Activated naive CD4-positive, alpha-beta T cell treated with anti-CD3 and anti-CD28 coated beads for 36 hours (primary cell): ENCODE measurements at regions of chr5 and their contacts with region 1.

Region 1: DNA sequence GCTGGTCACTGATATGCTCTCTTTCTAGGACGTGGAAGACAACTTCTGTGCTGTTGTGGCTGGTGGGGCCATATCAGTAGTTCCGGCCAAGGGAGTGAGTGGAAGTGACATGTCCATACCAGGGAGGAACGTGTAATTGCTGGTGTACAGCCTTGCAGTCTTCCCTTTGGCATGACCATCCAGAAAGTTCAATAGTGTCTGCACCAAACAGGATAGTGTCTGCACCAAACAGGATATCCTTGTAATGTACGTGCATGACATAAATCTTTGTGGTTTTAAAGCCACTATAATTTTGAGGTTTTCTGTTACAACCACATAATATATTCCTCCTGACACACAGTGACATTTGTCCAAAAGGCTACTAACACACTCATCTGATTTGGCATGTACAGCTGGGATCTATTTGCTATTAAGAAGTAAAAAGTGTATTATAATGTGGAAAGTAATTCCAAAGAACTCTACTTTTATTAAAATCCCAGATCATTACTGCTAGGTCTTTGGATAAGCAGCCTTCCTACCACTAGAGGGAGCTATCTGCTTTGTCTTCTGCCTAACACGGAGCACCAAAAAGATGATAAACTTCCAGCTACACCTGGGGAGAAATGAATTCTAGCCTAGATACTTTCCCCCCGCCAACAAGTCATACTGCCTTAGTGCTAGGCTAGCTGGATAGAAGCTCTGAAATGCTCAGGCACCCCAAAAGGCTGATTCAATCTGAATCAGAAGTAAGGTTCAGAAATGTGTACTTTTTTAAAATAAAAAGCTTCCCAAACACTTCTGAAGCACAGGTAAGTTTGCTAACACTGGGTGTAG is 52.7 kb downstream of the RNF145 start:
- DNase-seq: peak; percentile 58
- H3K4me3 Mint-ChIP-seq: no peak overlapping the region
- H3K27ac Mint-ChIP-seq: peak overlapping the region; percentile 35
- H3K4me1 Mint-ChIP-seq: peaks cover 36% of the 10 kb centered on the region
- H3K27me3 Mint-ChIP-seq: no peaks in the 10 kb centered on the region

Region 2: GRCh38 chr5:159198063-159199036 is 41.7 kb after region 1 on chr5:
- CTCF ChIA-PET with region 1: interaction called, 19 read pairs
- intact Hi-C with region 1: no loop called
- DNase-seq: no peak
- H3K4me3 Mint-ChIP-seq: no peak overlapping the region
- H3K27ac Mint-ChIP-seq: peak overlapping the region; percentile 55
- H3K4me1 Mint-ChIP-seq: peaks cover 74% of the 10 kb centered on the region
- H3K27me3 Mint-ChIP-seq: no peaks in the 10 kb centered on the region

Region 3: DNA sequence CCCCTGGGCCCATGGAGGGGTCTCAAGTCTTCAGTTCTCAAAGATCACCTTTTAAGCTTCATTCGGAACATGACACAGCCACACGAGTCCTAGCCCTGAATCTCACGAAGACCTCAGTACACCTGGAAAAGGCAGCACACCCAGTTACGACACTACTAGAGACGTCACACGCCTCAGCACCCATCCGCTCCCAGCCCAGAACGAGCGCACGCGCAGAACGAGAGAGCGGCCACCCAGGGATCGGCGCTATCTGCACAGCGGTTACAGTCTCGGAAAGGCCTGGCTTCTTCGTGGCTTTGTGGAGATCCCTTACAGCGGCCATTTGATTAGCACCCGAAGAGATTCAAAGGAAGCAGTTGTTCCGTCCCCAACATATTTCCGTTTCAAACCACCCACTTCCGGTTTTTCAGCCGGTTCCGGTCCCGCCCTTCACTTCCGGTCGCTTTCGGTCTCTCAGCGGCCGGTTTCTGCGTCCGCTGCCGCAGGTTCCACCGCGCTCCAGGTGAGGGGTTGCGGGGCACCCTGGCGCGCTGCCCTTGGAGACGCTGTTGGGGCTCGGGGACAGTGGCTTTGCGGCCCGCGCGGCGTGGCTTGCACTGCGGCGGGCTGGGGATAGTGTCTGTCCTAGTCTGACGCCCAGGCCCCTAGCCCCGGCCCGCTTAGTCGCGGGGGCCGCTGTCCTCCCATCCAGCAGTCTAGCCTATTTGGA is 106.4 kb after region 1 on chr5 and contains the start of gene UBLCP1:
- CTCF ChIA-PET with region 1: interaction called, 11 read pairs
- intact Hi-C with region 1: loop called (anchors 1 kb)
- DNase-seq: peak; percentile 82
- H3K4me3 Mint-ChIP-seq: peak within 1 kb of the TSS; percentile 96
- H3K27ac Mint-ChIP-seq: peak within 1 kb of the TSS; percentile 99
- H3K4me1 Mint-ChIP-seq: peaks cover 29% of the 10 kb centered on the region
- H3K27me3 Mint-ChIP-seq: no peaks in the 10 kb centered on the region
- total RNA-seq, gene UBLCP1: 22.7 to 23.0 TPM

Region 4: GRCh38 chr5:159310511-159310910 is 153.9 kb after region 1 on chr5:
- CTCF ChIA-PET with region 1: interaction called, 25 read pairs
- intact Hi-C with region 1: no loop called
- DNase-seq: peak; percentile 59
- H3K4me3 Mint-ChIP-seq: peak overlapping the region; percentile 43
- H3K27ac Mint-ChIP-seq: no peak overlapping the region
- H3K4me1 Mint-ChIP-seq: peaks cover 12% of the 10 kb centered on the region
- H3K27me3 Mint-ChIP-seq: peaks cover 5% of the 10 kb centered on the region

Region 5: GRCh38 chr5:159412284-159413046 is 255.8 kb after region 1 on chr5:
- CTCF ChIA-PET with region 1: interaction called, 4 read pairs
- intact Hi-C with region 1: loop called (anchors 2 kb)
- DNase-seq: peak; percentile 86
- H3K4me3 Mint-ChIP-seq: no peak overlapping the region
- H3K27ac Mint-ChIP-seq: peak overlapping the region; percentile 37
- H3K4me1 Mint-ChIP-seq: peaks cover 54% of the 10 kb centered on the region
- H3K27me3 Mint-ChIP-seq: peaks cover 3% of the 10 kb centered on the region

Region 6: DNA sequence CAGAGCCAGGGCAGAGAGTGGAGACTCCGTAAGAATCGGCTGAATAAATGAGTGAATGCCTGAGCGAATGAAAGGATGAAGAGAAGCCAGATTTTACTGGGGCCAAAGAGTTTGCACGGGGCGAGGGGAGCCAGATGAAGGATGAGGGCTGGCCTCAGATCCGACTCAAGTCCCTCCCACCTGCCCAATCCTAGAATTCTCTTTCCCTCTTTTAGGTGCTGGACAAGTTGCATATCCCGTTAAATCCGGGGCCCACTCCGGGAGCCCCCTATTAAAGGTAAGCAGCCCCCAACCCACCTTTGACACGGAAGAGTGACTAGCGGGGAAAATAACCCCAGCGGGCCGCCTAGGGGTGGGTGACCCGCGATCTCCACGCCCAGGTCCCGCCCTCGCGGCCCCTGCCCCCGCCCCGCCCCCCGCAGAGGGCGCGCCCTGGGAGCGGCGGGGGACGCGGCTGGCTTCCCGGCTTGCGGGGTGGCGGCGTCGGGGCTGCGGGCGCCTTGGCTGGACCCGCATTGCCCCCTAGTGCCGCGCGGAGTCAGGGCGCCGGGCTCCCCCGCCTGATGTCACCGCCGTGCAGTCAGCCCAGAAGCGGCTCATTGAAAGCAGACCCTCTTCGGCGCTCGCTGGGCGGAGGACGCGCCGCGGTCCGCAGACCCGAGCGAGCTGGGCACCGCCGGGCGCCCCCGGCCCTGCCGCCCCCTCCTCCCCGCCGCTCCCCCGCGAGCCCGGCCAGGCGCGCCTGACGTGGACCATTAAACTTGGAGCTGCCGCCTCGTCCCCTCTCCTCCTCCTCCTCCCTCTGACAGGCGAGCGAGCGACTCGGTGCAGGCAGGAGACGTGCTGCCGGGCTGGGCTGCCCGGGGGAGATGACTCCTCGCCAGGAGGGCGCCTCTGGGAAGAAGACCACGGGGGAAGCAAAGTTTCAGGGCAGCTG is 759.5 kb after region 1 on chr5 and contains the start of gene ADRA1B:
- CTCF ChIA-PET with region 1: no interaction called
- intact Hi-C with region 1: loop called (anchors 10 kb)
- DNase-seq: peak; percentile 66
- H3K4me3 Mint-ChIP-seq: peak within 1 kb of the TSS; percentile 36
- H3K27ac Mint-ChIP-seq: no peak within 1 kb of the TSS
- H3K4me1 Mint-ChIP-seq: peaks cover 6% of the 10 kb centered on the region
- H3K27me3 Mint-ChIP-seq: peaks cover 44% of the 10 kb centered on the region
- total RNA-seq, gene ADRA1B: not detected